ENCODE measurements at regions of chr3 and their contacts with region 1.

Region 1: DNA sequence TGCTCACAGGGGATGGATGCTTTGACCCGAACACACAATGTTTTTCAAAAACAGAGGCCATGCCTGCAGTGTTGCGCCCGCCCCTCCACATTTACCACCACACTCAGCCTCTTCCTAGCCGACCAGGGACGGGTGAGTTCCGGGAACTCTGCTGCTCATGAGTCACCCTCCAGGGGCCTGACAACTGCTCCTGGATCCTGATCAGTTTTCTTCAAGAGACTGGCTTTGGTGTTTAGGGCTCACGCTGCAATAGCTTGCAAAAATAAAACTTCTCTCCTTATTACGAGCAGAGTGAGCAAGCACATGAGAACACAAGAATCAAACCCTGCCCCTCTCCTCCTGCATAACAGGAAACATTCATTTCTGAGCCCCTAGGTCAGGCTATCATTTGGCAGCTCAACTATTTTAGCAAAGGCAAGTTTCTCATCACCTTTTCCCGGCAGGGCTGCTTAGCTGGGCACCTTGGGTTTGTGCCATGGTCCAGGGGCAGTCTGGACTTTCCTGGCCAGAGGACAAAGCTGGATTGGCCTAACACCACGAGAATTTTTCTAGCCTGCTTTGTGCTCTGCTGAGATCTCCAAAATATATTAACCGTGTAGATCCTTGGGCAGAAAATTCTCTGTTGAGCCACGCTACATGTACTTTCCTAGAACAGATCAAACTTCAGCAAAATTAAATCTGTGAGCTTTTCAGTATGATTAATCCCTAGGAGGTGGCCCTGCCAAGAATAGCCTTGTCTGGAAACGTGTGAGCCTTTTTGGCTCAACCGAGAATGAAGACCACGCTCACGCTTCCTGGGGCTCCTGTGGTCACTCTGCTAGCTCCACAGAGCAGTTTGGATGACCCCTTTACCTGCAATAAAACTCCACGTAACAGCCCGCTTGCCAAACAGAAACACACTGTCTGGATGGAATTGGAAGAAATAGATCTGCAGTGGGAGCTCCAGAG is 52.7 kb upstream of the SPATA12 start:
- ATAC-seq: peak; percentile 62 to 98 (median 94)
- H3K4me3 ChIP-seq: no peak overlapping the region
- H3K27ac ChIP-seq: no peak overlapping the region
- H3K4me1 ChIP-seq: peaks cover 2 to 17% of the 10 kb centered on the region in 2 donors

Region 2: GRCh38 chr3:56855856-56856512 is 151.8 kb before region 1 on chr3:
- in situ Hi-C with region 1: no loop called
- ATAC-seq: peak in 4 of 8 experiments; percentile 17 to 67 (median 43)
- H3K4me3 ChIP-seq: no peak overlapping the region
- H3K27ac ChIP-seq: no peak overlapping the region
- H3K4me1 ChIP-seq: peaks cover 5 to 8% of the 10 kb centered on the region in 2 donors

Region 3: DNA sequence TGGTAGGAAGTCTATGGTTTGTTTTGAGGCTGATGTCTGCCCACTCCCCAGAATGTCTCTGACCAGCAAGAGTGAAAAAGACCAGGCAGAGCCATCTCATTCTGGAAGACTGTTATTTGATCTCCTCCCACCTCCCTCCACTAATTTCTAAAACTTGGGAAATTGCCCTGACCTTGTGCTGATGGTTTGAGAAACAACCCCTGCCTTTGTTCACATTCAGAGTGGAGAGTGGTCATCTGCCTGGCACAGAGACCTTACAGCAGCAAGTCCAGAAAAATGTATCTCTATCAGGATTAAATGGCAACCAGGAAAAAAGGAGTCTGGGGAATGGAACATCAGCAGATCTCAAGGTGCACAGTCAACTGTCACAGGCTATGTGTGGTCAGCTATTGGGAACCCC is 78.4 kb after region 1 on chr3:
- in situ Hi-C with region 1: loop called in 1 of 9 experiments (anchors 10 kb)
- ATAC-seq: no peak
- H3K4me3 ChIP-seq: no peak overlapping the region
- H3K27ac ChIP-seq: no peak overlapping the region
- H3K4me1 ChIP-seq: no peaks in the 10 kb centered on the region

Measured in motor neuron (in vitro differentiated cells).